CD4-positive, alpha-beta memory T cell (primary cell): ENCODE measurements at regions of chr3 and their contacts with region 1.

Region 1: DNA sequence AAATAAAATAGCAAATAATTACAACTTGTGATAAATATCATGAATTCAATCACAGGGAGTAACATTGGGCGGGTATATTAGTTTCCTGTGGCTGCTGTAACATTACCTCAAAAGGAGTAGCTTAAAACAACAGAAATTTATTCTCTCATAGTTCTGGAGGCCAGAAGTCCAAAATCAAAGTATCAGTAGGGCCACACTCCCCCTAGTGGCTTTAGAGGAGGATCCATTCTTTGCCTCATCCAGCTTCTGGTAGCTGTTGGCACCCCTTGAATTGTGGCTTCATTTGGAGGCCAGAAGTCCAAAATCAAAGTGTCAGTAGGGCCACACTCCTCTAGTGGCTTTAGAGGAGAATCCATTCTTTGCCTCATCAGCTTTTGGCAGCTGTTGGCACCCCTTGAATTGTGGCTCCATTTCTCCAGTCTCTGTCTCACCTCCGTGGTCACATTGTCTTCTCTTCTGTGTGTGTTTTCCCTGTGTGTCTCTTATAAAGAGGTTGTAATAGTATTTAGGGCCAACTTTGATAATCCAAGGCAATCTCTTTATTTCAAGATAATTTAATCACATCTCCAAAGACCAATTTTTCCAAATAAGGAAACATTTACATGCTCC is 3.1 kb upstream of the CFAP20DC start:
- DNase-seq: peak in 2 of 5 donors; percentile 11 to 21
- H3K4me3 ChIP-seq: no peak overlapping the region
- H3K4me3 Mint-ChIP-seq: no peak overlapping the region
- H3K27ac ChIP-seq: no peak overlapping the region
- H3K27ac Mint-ChIP-seq: peak overlapping the region in 4 of 7 donors; percentile 12 to 74 (median 44)
- H3K4me1 ChIP-seq: peaks cover 6% of the 10 kb centered on the region
- H3K4me1 Mint-ChIP-seq: peaks cover 5 to 12% (median 9%) of the 10 kb centered on the region in 4 donors
- H3K27me3 ChIP-seq: no peaks in the 10 kb centered on the region
- H3K27me3 Mint-ChIP-seq: no peaks in the 10 kb centered on the region

Region 2: DNA sequence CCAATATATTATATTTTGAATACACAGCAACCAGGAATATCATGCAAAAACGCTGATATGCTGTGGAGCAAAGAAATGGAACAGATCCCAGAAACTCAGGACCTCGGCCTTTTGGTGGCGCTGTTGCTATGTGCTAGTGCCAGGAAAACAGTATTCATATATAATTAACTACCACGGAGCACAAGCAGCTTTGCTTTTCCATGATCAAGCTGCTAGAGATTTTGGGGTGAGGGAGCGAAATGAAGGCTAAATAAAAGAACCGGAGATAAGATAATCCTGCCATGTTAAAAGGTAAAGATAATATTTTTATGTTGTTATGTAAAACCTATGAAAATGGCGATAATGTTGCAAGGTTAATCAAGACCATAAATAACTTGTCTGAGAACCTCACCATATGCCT is 228.6 kb before region 1 on chr3:
- CTCF ChIA-PET with region 1: interaction called, 3 read pairs
- POLR2A ChIA-PET with region 1: no interaction called
- intact Hi-C with region 1: loop called (anchors 2 kb)
- DNase-seq: peak in 1 of 5 donors; percentile 0
- H3K4me3 ChIP-seq: no peak overlapping the region
- H3K4me3 Mint-ChIP-seq: no peak overlapping the region
- H3K27ac ChIP-seq: no peak overlapping the region
- H3K27ac Mint-ChIP-seq: no peak overlapping the region
- H3K4me1 ChIP-seq: no peaks in the 10 kb centered on the region
- H3K4me1 Mint-ChIP-seq: no peaks in the 10 kb centered on the region
- H3K27me3 ChIP-seq: no peaks in the 10 kb centered on the region
- H3K27me3 Mint-ChIP-seq: no peaks in the 10 kb centered on the region

Region 3: GRCh38 chr3:58994746-58995330 is 58.1 kb before region 1 on chr3:
- CTCF ChIA-PET with region 1: interaction called, 20 read pairs
- POLR2A ChIA-PET with region 1: interaction called, 4 read pairs
- intact Hi-C with region 1: loop called (anchors 2 kb)
- DNase-seq: peak in 4 of 5 donors; percentile 24 to 40 (median 30)
- H3K4me3 ChIP-seq: no peak overlapping the region
- H3K4me3 Mint-ChIP-seq: peak overlapping the region in 2 of 8 donors; percentile 42 to 51
- H3K27ac ChIP-seq: no peak overlapping the region
- H3K27ac Mint-ChIP-seq: no peak overlapping the region
- H3K4me1 ChIP-seq: no peaks in the 10 kb centered on the region
- H3K4me1 Mint-ChIP-seq: peaks cover 0 to 4% (median 1%) of the 10 kb centered on the region in 4 donors
- H3K27me3 ChIP-seq: no peaks in the 10 kb centered on the region
- H3K27me3 Mint-ChIP-seq: peaks cover 0 to 6% of the 10 kb centered on the region in 2 donors

Region 4: DNA sequence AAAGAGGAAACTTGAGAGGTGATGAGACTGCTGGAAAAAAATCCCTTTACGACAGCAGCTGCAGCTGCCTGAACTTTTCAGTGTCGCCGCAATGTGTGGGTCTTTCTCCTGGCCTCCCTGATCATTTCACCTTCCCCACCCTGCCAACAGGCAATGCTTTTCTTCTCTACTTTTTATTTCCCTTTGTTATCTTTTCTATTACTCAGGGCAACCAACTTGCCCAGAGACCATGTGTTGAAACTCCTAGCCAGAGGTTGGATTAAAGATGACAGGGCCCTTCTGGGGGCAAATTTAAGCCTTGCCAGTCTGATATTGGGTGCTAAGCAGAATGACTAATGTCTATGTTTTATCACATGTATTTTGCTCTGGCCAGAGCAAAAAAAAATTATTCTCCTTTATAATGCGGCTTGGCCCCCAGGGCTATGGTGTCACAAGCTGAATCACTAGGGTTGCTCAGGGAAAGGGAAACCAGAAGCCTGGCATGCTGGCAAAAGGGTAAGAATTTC is 48.4 kb after region 1 on chr3:
- CTCF ChIA-PET with region 1: no interaction called
- POLR2A ChIA-PET with region 1: no interaction called
- intact Hi-C with region 1: no loop called
- DNase-seq: no peak
- H3K4me3 ChIP-seq: no peak overlapping the region
- H3K4me3 Mint-ChIP-seq: no peak overlapping the region
- H3K27ac ChIP-seq: no peak overlapping the region
- H3K27ac Mint-ChIP-seq: no peak overlapping the region
- H3K4me1 ChIP-seq: no peaks in the 10 kb centered on the region
- H3K4me1 Mint-ChIP-seq: peaks cover 0 to 1% (median 0%) of the 10 kb centered on the region in 4 donors
- H3K27me3 ChIP-seq: no peaks in the 10 kb centered on the region
- H3K27me3 Mint-ChIP-seq: peaks cover 5 to 7% of the 10 kb centered on the region in 2 donors